Ovary (tissue), 10 donors: ENCODE measurements at regions of chr14 and their contacts with region 1.

Region 1: DNA sequence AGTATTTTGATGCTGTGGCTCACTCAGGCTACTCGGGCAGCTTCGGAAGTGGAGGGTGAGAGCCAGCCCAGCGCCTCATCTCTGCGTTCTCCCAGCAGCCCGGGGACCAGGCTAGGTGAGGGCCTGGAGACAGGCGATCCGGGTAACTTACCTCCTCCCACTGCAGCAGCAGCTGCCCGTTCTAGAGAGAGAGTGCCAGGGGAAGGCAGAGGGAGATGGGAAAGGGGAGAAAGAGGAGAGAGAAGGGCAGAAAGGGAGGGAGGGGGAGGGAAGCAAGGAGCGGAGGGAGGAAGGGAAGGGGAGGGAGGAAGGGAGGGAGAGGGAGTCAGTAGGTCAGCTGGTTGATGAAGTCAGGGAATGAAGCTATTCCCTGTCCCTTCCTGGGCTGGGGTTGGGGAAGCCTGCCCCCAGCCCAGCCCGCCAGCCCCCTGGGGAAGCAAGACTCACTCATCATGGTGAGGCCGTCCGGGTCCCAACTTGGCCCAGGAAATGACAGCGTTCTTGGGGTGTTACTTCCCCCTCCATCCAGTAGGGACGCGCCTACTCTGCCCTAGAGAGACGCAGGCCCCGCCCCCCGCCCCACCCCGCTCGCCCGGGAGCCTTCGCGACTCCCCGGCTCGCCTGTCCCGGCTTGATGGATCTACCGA is at the start of gene IFI27L2:
- DNase-seq: peak; percentile 75 to 80 (median 78)
- H3K4me3 ChIP-seq: peak within 1 kb of the TSS; percentile 50
- H3K27ac ChIP-seq: peak within 1 kb of the TSS; percentile 91 to 94
- H3K4me1 ChIP-seq: no peaks in the 10 kb centered on the region
- H3K27me3 ChIP-seq: no peaks in the 10 kb centered on the region
- CTCF ChIP-seq: peak; percentile 37 to 46 (median 42)
- EP300 ChIP-seq: no peak
- POLR2A ChIP-seq: peak; percentile 27
- total RNA-seq, gene IFI27L2: 53.4 to 106 (median 88.5) TPM

Region 2: GRCh38 chr14:93683226-93683625 is 446.0 kb before region 1 on chr14:
- intact Hi-C with region 1: no loop called
- DNase-seq: no peak
- H3K4me3 ChIP-seq: no peak overlapping the region
- H3K27ac ChIP-seq: no peak overlapping the region
- H3K4me1 ChIP-seq: no peaks in the 10 kb centered on the region
- H3K27me3 ChIP-seq: no peaks in the 10 kb centered on the region
- CTCF ChIP-seq: no peak
- EP300 ChIP-seq: no peak
- POLR2A ChIP-seq: no peak

Region 3: GRCh38 chr14:94051115-94051514 is 78.1 kb before region 1 on chr14:
- intact Hi-C with region 1: loop called in 2 of 4 experiments (anchors 5 kb)
- DNase-seq: peak; percentile 75 to 87 (median 81)
- H3K4me3 ChIP-seq: no peak overlapping the region
- H3K27ac ChIP-seq: no peak overlapping the region
- H3K4me1 ChIP-seq: no peaks in the 10 kb centered on the region
- H3K27me3 ChIP-seq: no peaks in the 10 kb centered on the region
- CTCF ChIP-seq: peak; percentile 15 to 60 (median 48)
- EP300 ChIP-seq: no peak
- POLR2A ChIP-seq: no peak

Region 4: GRCh38 chr14:94056579-94057308 is 72.5 kb before region 1 on chr14:
- intact Hi-C with region 1: loop called in 2 of 4 experiments (anchors 5 kb)
- DNase-seq: no peak
- H3K4me3 ChIP-seq: no peak overlapping the region
- H3K27ac ChIP-seq: no peak overlapping the region
- H3K4me1 ChIP-seq: peaks cover 11% of the 10 kb centered on the region
- H3K27me3 ChIP-seq: no peaks in the 10 kb centered on the region
- CTCF ChIP-seq: no peak
- EP300 ChIP-seq: no peak
- POLR2A ChIP-seq: no peak

Region 5: GRCh38 chr14:94143239-94143638 is 14.0 kb after region 1 on chr14:
- intact Hi-C with region 1: no loop called
- DNase-seq: no peak
- H3K4me3 ChIP-seq: no peak overlapping the region
- H3K27ac ChIP-seq: no peak overlapping the region
- H3K4me1 ChIP-seq: no peaks in the 10 kb centered on the region
- H3K27me3 ChIP-seq: no peaks in the 10 kb centered on the region
- CTCF ChIP-seq: no peak
- EP300 ChIP-seq: no peak
- POLR2A ChIP-seq: no peak